ENCODE measurements at regions of chr4 and their contacts with region 1.

Region 1: DNA sequence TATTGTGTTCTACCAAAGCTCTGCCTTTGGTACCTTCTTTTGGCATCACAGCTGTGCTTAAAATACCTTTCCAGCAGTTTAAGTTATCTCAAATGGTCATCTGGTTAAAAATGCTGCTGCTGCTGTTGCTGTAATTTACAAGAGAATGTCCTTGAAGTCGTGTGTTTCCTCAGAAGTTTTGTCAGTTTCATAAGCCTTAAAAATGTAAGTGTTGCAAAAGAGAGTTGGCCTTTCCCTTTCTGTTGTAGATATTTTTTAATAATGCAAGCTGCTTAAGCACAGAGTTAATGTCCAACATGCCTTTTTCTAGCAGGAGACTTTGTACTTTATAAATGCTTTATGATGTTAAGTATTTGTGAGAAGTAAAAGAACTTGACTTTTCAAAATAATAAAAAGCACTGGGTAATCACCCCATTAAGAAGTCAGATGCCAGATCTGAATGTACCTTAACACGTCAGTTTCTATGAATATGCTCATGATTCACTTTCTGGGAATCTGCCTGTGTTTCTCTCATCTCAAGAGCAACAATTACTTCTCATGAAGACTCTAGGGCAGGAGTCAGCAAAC is 35.3 kb upstream of the TENM3 start:
- DNase-seq: no peak
- H3K4me3 ChIP-seq: no peak overlapping the region
- H3K4me3 Mint-ChIP-seq: no peak overlapping the region
- H3K27ac Mint-ChIP-seq: peak overlapping the region; percentile 60
- H3K4me1 ChIP-seq: peaks cover 60% of the 10 kb centered on the region
- H3K4me1 Mint-ChIP-seq: peaks cover 42% of the 10 kb centered on the region
- H3K27me3 ChIP-seq: no peaks in the 10 kb centered on the region
- H3K27me3 Mint-ChIP-seq: no peaks in the 10 kb centered on the region
- CTCF ChIP-seq: no peak

Region 2: GRCh38 chr4:182222766-182223165 is 14.9 kb after region 1 on chr4:
- CTCF ChIA-PET with region 1: no interaction called
- POLR2A ChIA-PET with region 1: no interaction called
- intact Hi-C with region 1: loop called (anchors 2 kb)
- DNase-seq: peak in 1 of 2 experiments; percentile 50
- H3K4me3 ChIP-seq: no peak overlapping the region
- H3K4me3 Mint-ChIP-seq: no peak overlapping the region
- H3K27ac Mint-ChIP-seq: no peak overlapping the region
- H3K4me1 ChIP-seq: peaks cover 21% of the 10 kb centered on the region
- H3K4me1 Mint-ChIP-seq: peaks cover 13% of the 10 kb centered on the region
- H3K27me3 ChIP-seq: no peaks in the 10 kb centered on the region
- H3K27me3 Mint-ChIP-seq: no peaks in the 10 kb centered on the region
- CTCF ChIP-seq: no peak

Measured in Caco-2 (cell line).